ENCODE measurements at regions of chr6 and their contacts with region 1.

Region 1: DNA sequence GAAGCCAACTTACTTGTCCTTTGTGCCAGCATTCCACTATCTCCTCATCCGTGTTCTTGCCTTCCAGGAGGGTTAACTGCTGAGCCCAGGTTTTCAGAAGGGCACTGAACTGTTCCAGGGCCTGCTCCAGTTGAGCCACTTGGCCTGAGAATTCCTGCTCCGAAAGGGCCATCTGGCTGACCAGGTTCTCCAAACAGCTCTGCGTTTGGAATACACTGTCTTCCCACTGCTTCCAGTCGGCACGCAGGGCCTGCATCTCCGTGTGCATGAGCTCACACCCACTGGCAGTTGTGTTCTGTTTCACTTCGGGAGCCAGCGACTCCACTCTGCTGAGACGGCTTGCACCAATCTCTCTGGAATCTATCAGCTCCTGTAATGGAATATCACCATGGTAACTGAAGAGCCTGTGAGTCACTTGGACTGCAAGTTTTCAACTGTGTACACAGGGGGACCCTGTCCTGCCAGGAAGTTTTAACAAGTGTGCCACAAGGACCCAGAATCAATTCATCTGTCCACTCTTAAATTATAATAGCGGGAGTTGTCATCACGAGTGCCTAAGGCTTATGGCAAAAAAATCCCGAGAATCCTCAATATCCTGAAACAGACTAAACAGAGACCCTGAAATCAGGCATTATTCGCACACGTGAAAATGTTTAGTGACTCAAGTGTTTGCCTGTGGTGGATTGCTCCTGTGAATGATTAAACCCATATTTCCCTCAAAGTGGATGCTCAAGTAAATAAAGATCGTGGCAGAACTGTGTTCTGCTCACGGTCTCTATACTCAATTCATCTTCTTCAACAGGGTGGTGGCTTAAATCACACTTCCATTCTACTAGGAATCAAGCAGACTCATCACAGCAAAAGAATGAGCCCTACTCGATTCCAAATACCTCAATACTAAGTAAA is 255.9 kb downstream of the SYNE1 start:
- DNase-seq: peak; percentile 74
- H3K4me3 ChIP-seq: peak overlapping the region; percentile 33 to 51 (median 51)
- H3K27ac ChIP-seq: peak overlapping the region; percentile 84
- H3K4me1 ChIP-seq: peaks cover 19% of the 10 kb centered on the region
- H3K27me3 ChIP-seq: no peaks in the 10 kb centered on the region
- CTCF ChIP-seq: no peak

Region 2: DNA sequence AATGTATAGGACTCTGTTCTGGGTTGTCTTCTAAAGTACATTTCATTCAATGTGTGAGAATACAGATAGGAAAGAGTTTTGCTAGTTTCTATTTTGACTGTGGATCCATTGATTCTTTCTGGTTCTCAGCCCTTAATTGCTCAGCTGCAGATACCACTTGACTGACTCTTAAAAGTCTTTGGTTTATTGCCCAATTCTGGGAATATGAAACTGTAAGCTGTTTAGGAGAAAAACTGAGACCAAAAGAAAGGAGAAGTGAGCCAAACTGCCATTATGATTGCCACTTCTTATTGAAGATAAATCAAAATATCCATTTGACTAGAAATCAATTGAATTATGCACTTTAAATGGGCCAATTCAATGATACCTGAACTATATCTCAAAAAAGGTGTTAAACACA is 362.4 kb before region 1 on chr6:
- CTCF ChIA-PET with region 1: no interaction called
- dilution Hi-C with region 1: no loop called
- in situ Hi-C with region 1: no loop called
- intact Hi-C with region 1: no loop called
- DNase-seq: no peak
- H3K4me3 ChIP-seq: no peak overlapping the region
- H3K27ac ChIP-seq: no peak overlapping the region
- H3K4me1 ChIP-seq: no peaks in the 10 kb centered on the region
- H3K27me3 ChIP-seq: no peaks in the 10 kb centered on the region
- CTCF ChIP-seq: no peak

Region 3: DNA sequence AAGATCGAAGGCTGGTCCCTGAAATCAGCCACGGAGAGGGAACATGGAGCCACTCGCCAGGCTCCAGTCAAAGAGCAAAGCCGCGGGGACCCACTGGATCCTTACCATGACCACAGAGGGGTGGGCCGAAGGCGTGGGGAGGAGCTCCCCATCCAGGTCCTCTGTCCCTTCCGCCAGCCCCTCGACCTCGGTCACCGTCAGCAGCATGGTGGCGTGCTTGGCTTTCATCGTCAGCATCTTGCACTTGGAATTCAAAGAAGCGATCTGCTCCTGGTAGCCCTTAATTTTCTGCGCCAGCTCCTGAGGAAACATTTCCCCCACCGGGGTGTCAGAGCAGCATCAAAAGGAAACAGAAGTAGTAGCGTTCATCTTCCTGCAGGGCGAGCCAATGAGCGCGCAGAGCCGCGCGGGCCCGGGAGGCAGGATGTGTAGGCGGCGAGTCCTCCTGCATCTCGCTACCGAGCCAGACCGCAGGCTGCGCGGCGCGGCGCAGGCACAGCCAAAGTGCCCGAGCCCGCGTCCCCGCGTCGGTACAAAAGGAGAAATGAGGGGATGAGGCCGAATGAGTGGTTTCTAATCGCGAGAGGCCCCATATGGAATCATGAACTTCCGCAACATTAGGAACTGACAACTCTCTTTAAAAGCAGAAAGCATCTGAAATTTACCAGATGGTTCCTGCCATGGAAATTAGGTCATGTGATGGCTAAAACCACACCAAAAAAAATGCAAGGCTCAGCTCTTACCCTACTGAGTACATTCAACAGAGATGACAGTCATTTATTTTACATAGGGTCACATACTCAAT is 79.3 kb before region 1 on chr6:
- CTCF ChIA-PET with region 1: interaction called, 3 read pairs
- dilution Hi-C with region 1: no loop called
- in situ Hi-C with region 1: no loop called
- intact Hi-C with region 1: loop called (anchors 2 kb)
- DNase-seq: peak; percentile 86
- H3K4me3 ChIP-seq: peak overlapping the region; percentile 63 to 92 (median 83)
- H3K27ac ChIP-seq: peak overlapping the region; percentile 9
- H3K4me1 ChIP-seq: peaks cover 5% of the 10 kb centered on the region
- H3K27me3 ChIP-seq: no peaks in the 10 kb centered on the region
- CTCF ChIP-seq: peak; percentile 38 to 70

Region 4: GRCh38 chr6:152401978-152402377 is 20.7 kb after region 1 on chr6:
- CTCF ChIA-PET with region 1: no interaction called
- dilution Hi-C with region 1: no loop called
- in situ Hi-C with region 1: no loop called
- intact Hi-C with region 1: loop called (anchors 1 kb)
- DNase-seq: peak; percentile 77
- H3K4me3 ChIP-seq: no peak overlapping the region
- H3K27ac ChIP-seq: peak overlapping the region; percentile 52
- H3K4me1 ChIP-seq: peaks cover 25% of the 10 kb centered on the region
- H3K27me3 ChIP-seq: no peaks in the 10 kb centered on the region
- CTCF ChIP-seq: no peak

Region 5: DNA sequence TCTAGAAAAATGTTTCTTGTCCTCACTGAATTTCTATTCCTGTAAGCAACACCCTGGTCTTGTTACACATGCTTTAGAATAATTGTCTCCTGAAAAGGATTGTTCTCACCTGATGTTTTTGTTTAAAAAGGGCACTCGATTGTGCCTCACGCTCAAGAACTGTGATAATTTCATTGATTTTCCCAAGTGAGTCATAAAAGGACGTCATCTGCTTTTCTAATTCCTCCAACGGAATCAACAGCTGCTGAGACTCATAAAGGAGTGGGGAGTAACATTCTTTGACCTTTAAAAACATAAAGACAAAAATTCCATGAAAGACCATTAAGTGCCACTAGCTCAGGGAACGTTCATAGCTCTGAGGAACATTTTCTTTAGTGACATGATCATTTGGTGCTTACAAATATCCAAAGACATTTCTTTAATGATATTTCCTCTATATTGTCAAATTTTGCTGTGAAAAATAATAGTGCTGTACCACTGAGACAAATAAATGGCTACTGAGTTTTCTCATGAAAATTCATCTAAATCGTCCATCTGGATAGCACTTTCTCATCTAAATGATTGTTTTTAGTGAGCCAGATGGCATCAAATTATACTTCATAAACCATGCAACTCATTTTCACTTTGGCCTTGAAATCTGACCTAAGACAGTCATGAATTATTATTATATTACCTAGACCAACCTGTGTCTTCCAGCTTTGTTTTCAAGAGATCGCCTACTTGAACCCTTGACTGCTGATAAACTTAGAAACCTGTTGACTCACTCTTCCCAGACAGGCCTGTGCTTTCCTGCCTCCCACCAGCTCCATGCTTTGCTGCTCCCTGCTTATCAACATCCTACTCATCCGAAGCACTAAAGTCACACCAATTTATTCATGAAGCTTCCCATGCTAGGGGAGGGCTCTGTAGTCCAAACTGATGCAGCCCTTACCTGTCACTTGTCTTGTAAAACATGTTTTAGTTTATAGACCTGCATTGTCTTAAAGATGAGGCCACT is 77.7 kb after region 1 on chr6:
- CTCF ChIA-PET with region 1: no interaction called
- dilution Hi-C with region 1: no loop called
- in situ Hi-C with region 1: no loop called
- intact Hi-C with region 1: loop called (anchors 5 kb)
- DNase-seq: no peak
- H3K4me3 ChIP-seq: no peak overlapping the region
- H3K27ac ChIP-seq: no peak overlapping the region
- H3K4me1 ChIP-seq: peaks cover 3% of the 10 kb centered on the region
- H3K27me3 ChIP-seq: no peaks in the 10 kb centered on the region
- CTCF ChIP-seq: no peak

Measured in mammary epithelial cell (primary cell).